ENCODE measurements at regions of chr2 and their contacts with region 1.

Region 1: DNA sequence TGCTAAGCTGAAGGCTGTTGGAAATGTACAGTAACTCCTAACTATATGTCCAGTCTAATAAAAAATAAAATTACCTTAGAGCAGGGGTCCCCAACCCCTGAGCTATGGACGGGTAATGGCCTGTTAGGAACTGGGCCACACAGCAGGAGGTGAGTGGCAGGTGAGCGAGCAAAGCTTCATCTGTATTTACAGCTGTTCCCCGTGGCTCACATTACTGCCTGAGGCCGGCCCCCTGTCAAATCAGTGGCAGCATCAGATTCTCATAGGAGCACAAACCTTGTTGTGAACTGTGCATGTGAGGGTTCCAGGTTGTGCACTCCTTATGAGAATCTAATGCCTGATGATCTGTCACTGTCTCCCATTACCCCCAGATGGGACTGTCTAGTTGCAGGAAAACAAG is 73.1 kb upstream of the CXCR4 start:
- DNase-seq: no peak
- H3K4me3 Mint-ChIP-seq: no peak overlapping the region
- H3K27ac Mint-ChIP-seq: no peak overlapping the region
- H3K4me1 Mint-ChIP-seq: peaks cover 2% of the 10 kb centered on the region
- H3K27me3 Mint-ChIP-seq: no peaks in the 10 kb centered on the region

Region 2: DNA sequence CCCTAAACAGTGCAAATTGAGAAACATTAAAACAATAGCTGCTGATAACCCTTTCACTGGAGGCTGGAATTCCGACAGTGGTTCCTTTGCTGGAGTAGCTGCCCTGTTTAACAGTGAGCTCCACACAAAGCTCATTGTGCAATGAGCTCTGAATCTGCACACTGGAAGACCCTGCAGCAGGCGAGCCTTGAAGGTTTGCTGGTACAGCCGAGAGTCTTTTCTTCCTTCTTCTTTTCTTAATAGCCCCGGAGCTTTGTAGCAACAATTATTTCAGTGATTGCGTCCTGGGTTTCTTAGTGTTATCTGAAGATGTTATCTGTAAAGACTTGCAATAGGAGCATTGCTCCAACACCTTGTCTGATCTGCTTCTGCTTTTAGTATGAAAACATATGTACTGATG is 22.3 kb before region 1 on chr2:
- CTCF ChIA-PET with region 1: no interaction called
- POLR2A ChIA-PET with region 1: no interaction called
- intact Hi-C with region 1: no loop called
- DNase-seq: no peak
- H3K4me3 Mint-ChIP-seq: no peak overlapping the region
- H3K27ac Mint-ChIP-seq: no peak overlapping the region
- H3K4me1 Mint-ChIP-seq: peaks cover 6% of the 10 kb centered on the region
- H3K27me3 Mint-ChIP-seq: no peaks in the 10 kb centered on the region

Region 3: GRCh38 chr2:136178941-136179601 is 12.0 kb before region 1 on chr2:
- CTCF ChIA-PET with region 1: no interaction called
- POLR2A ChIA-PET with region 1: no interaction called
- intact Hi-C with region 1: loop called (anchors 2 kb)
- DNase-seq: no peak
- H3K4me3 Mint-ChIP-seq: no peak overlapping the region
- H3K27ac Mint-ChIP-seq: no peak overlapping the region
- H3K4me1 Mint-ChIP-seq: peaks cover 7% of the 10 kb centered on the region
- H3K27me3 Mint-ChIP-seq: no peaks in the 10 kb centered on the region

Measured in activated CD4-positive, alpha-beta memory T cell treated with anti-CD3 and anti-CD28 coated beads for 36 hours (primary cell).